ENCODE measurements at regions of chr9 and their contacts with region 1.

Region 1: DNA sequence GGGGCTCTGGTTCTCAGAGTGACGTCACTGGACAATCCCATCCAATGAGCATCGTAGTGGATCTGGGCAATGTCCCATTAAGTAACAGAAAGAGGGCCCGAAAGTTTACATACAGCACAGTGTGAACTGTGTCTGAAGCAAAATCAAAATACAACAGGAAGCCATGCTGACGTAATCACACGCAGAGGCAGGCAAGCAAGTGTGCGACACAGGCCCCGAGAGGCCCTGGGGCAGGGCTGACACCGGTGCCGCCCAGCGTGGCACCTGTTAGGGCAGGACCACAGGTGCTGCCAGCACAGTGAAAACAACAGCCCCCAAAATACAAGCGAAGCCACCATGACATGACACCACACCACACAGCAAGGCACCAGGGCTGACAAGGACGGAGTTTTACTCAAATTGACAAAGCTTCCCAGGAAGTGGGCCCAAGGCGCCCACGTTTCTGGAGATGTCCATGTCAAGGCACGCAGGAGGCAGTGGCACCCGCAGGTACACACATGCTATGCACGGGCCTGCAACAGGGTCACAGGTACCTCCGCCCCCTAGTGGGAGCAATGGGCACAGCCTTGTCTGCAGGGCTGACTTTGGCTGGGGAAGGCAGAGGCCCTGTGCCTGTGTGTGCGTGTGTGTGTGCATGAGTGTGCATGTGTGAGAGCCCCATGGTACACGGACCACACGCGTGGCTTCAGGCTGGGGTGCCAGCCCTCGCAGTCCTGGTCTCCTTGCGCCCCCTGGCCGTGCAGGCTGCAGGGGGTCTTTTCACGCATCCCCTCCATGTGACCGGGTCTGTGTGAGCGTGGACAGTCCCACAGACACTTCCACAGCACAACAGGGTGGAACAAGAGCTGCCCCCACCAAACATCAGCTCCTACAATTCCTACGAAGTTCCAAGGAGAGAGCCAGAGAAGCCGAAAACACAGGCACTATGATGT is 19.6 kb downstream of the QSOX2 start:
- DNase-seq: peak; percentile 81 to 85
- H3K4me3 ChIP-seq: no peak overlapping the region
- H3K4me3 Mint-ChIP-seq: no peak overlapping the region
- H3K27ac Mint-ChIP-seq: no peak overlapping the region
- H3K4me1 ChIP-seq: no peaks in the 10 kb centered on the region
- H3K4me1 Mint-ChIP-seq: no peaks in the 10 kb centered on the region
- H3K27me3 ChIP-seq: no peaks in the 10 kb centered on the region
- H3K27me3 Mint-ChIP-seq: no peaks in the 10 kb centered on the region
- CTCF ChIP-seq: peak; percentile 91 to 97

Region 2: DNA sequence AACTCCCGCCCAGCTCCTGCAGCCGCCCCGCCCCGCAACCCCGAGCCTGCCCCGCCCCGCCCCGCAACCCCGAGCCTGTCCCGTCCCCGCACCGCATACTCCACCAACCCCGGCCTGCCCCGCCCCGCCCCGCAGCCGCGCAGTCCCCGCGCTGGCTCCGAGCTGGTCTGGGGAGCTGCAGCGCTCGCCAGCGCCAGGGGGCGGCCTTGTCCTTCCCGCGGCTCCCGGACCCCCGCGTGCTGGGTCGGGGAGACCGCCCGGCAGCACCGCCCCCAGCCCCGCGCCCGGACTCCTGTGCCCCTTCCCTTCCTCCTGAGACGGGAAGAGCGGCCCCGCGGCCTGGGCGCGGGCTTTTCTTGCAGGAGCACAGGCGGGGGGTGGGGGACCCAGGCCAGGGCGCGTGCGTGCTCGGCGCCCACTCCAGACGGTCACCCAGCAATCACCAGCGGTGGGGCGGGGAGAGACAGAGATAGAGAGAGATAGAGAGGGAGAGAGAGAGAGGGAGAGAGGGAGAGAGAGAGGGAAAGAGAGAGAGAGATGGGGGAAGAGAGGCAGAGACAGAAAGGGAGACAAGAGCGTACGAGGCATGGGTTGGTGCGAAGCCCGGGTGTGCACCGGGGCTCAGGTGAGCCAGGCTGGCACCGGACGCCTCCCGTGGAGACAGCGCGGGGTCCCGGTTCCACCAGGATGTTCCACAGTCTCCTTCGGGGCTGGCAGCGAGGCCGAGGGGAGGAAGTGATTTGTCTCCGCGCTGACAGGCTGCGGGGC is 92.6 kb before region 1 on chr9:
- CTCF ChIA-PET with region 1: interaction called, 3 read pairs
- POLR2A ChIA-PET with region 1: no interaction called
- intact Hi-C with region 1: loop called (anchors 1 kb)
- DNase-seq: peak; percentile 77 to 83
- H3K4me3 ChIP-seq: peak overlapping the region; percentile 49
- H3K4me3 Mint-ChIP-seq: peak overlapping the region; percentile 82
- H3K27ac Mint-ChIP-seq: peak overlapping the region; percentile 76
- H3K4me1 ChIP-seq: peaks cover 33% of the 10 kb centered on the region
- H3K4me1 Mint-ChIP-seq: peaks cover 12% of the 10 kb centered on the region
- H3K27me3 ChIP-seq: no peaks in the 10 kb centered on the region
- H3K27me3 Mint-ChIP-seq: no peaks in the 10 kb centered on the region
- CTCF ChIP-seq: peak; percentile 60 to 63

Region 3: GRCh38 chr9:136143216-136144001 is 82.6 kb before region 1 on chr9:
- CTCF ChIA-PET with region 1: no interaction called
- POLR2A ChIA-PET with region 1: no interaction called
- intact Hi-C with region 1: loop called (anchors 1 kb)
- DNase-seq: peak; percentile 61 to 62
- H3K4me3 ChIP-seq: no peak overlapping the region
- H3K4me3 Mint-ChIP-seq: no peak overlapping the region
- H3K27ac Mint-ChIP-seq: no peak overlapping the region
- H3K4me1 ChIP-seq: no peaks in the 10 kb centered on the region
- H3K4me1 Mint-ChIP-seq: no peaks in the 10 kb centered on the region
- H3K27me3 ChIP-seq: no peaks in the 10 kb centered on the region
- H3K27me3 Mint-ChIP-seq: no peaks in the 10 kb centered on the region
- CTCF ChIP-seq: peak; percentile 54 to 60

Region 4: GRCh38 chr9:136170006-136170901 is 55.8 kb before region 1 on chr9:
- CTCF ChIA-PET with region 1: interaction called, 5 read pairs
- POLR2A ChIA-PET with region 1: no interaction called
- intact Hi-C with region 1: loop called (anchors 10 kb)
- DNase-seq: peak in 1 of 2 experiments; percentile 43
- H3K4me3 ChIP-seq: no peak overlapping the region
- H3K4me3 Mint-ChIP-seq: peak overlapping the region; percentile 56
- H3K27ac Mint-ChIP-seq: peak overlapping the region; percentile 95
- H3K4me1 ChIP-seq: peaks cover 46% of the 10 kb centered on the region
- H3K4me1 Mint-ChIP-seq: peaks cover 25% of the 10 kb centered on the region
- H3K27me3 ChIP-seq: no peaks in the 10 kb centered on the region
- H3K27me3 Mint-ChIP-seq: no peaks in the 10 kb centered on the region
- CTCF ChIP-seq: peak; percentile 43 to 61